ENCODE measurements at regions of chr3 and their contacts with region 1.

Region 1: DNA sequence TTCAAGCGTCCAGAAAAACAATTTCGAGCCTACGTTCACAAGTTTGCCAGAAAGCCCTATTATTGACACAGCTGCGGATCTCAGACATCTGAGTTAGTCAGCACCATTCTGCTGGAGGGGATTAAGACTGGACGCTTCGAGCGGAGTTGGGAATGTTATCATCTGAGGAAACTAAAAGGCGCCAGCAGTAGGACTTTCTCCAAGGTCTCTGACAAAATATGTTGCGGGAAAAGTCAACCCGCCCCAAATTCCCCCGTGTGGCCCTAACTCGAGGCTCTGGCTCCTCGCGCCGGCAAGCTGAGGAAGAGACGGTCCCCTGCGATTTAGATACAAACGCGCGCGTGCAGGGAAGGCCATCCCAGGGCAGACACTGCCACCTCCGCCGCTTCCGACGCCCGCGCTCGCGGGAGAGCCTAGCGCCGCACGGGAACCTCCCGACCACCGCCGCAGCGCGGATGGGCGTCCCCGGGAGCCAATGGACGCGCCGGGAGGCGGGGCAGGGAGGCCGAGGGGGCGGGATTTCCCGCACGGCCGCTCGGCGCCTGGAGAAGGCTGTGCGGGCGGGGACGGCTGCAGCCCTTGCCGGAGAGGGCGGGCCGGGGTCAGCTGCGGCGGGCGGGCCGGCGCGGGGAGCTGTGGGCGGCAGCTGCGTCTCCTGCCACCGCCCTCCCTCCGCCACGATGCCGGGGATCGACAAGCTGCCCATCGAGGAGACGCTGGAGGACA is at the start of gene APPL1:
- DNase-seq: peak; percentile 97
- ATAC-seq: peak; percentile 98
- total RNA-seq, gene APPL1: 49.2 TPM

Region 2: GRCh38 chr3:57100046-57100695 is 127.2 kb before region 1 on chr3:
- intact Hi-C with region 1: loop called (anchors 10 kb)
- DNase-seq: no peak
- ATAC-seq: peak; percentile 85

Region 3: DNA sequence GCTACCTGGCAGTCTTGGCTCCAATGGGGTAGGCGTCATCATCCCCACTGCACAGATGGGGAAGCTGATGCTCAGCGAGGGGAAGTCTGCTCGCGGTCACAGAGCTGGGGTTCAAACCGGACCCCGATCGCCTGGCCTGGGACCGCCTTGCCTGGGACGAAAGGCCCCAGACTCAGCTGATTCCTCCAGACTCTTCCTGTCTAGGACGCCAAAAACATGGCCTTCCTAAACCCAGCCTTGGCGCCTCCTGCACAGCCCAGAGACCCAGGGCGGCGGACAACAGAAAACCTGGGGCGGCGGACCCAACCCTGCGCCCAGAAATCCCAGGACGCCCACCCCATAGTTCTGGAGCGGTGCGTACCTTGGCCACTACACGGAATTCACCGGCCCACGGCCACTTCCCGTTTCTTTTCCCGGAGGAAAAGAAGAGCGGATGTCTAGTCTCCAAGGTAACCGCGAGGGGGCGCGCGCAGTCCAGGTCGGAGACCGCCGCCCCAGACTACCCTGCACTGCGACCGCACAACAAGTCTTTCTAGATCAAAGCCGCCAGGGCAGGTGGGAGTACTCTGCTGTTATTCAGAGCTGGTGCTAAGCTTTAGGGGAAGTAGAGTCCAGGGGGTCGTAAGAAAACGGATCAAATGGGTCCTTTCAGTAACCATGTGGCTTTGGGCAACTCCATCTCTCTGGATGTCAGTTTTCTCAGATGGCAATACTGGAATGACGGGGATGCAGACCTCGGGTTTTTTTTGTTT is 57.3 kb before region 1 on chr3:
- intact Hi-C with region 1: loop called (anchors 10 kb)
- DNase-seq: peak; percentile 84
- ATAC-seq: peak; percentile 80

Region 4: GRCh38 chr3:57370341-57370740 is 143.0 kb after region 1 on chr3:
- intact Hi-C with region 1: no loop called
- DNase-seq: no peak
- ATAC-seq: no peak

Measured in left ventricle myocardium superior (tissue), 1 donor.